Right cardiac atrium (tissue), 5 donors: ENCODE measurements at regions of chr17 and their contacts with region 1.

Region 1: DNA sequence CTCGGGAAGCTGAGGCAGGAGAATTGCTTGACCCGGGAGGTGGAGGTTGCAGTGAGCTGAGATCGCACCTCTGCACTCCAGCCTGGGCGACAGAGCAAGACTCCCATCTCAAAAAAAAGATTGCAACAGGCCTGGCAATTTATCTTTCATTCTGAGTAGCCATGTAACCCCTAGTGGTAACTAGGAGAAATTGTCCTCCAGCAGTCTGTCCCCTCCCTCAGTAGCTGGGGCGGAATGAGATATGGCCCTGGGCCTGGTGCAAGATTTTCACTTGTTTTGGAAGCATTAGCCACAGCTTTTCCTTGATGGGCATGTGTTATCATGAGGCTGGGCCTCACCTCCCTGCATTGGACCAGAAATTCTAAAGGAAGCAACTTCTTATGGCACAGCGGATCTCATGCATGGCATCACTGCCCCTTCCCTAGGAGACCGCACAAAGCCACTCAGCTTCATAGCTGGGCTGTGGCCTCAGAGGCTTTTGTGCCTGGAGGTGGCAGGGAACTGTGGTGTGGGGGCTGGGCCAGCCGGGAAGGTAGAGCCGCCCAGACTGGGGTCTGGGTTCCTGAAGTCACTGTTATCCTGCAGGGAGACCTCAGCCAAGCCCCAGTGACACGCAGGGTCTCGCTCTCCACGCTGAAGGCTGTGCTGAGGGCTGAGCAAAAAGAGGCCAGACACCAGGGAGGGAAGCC is 13.4 kb downstream of the NATD1 start:
- DNase-seq: peak in 1 of 3 donors; percentile 43
- ATAC-seq: peak; percentile 29 to 30
- H3K4me3 ChIP-seq: no peak overlapping the region
- H3K27ac ChIP-seq: no peak overlapping the region
- H3K4me1 ChIP-seq: peaks cover 2% of the 10 kb centered on the region
- H3K27me3 ChIP-seq: no peaks in the 10 kb centered on the region

Region 2: GRCh38 chr17:21161498-21162393 is 78.1 kb before region 1 on chr17:
- intact Hi-C with region 1: loop called in 1 of 4 experiments (anchors 10 kb)
- DNase-seq: no peak
- ATAC-seq: peak; percentile 50 to 57
- H3K4me3 ChIP-seq: no peak overlapping the region
- H3K27ac ChIP-seq: peak overlapping the region; percentile 61
- H3K4me1 ChIP-seq: peaks cover 6% of the 10 kb centered on the region
- H3K27me3 ChIP-seq: no peaks in the 10 kb centered on the region